Caco-2 (cell line): ENCODE measurements at regions of chr11 and their contacts with region 1.

Region 1: DNA sequence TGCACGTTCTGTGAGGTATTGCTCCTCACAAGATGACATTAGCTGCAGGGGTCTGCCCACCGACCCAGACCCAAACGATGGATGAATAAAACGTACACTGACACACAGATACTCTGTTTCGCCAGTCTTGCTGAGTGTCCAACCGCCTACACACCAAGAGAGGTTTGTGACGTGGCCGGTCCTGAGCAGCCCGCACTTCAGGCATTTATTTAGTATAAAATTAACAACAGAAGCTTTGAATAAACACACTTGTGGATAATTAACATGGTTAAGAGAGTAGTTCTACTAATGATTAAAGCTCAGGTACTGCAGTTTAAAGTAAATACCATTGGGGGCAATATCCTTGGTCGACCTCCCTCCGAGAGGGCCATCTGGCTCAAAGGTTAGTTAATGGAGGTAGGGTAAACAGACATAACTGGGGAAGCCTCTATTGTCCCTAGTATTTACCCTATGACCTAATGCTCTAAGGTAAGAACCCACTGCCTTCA is 75.7 kb downstream of the CCDC83 start:
- DNase-seq: peak; percentile 74 to 87
- H3K4me3 ChIP-seq: no peak overlapping the region
- H3K4me3 Mint-ChIP-seq: no peak overlapping the region
- H3K27ac Mint-ChIP-seq: peak overlapping the region; percentile 46
- H3K4me1 ChIP-seq: peaks cover 31% of the 10 kb centered on the region
- H3K4me1 Mint-ChIP-seq: peaks cover 29% of the 10 kb centered on the region
- H3K27me3 ChIP-seq: no peaks in the 10 kb centered on the region
- H3K27me3 Mint-ChIP-seq: no peaks in the 10 kb centered on the region
- CTCF ChIP-seq: no peak

Region 2: GRCh38 chr11:85742873-85743275 is 188.0 kb before region 1 on chr11:
- CTCF ChIA-PET with region 1: no interaction called
- POLR2A ChIA-PET with region 1: no interaction called
- intact Hi-C with region 1: no loop called
- DNase-seq: no peak
- H3K4me3 ChIP-seq: no peak overlapping the region
- H3K4me3 Mint-ChIP-seq: peak overlapping the region; percentile 15
- H3K27ac Mint-ChIP-seq: peak overlapping the region; percentile 56
- H3K4me1 ChIP-seq: peaks cover 30% of the 10 kb centered on the region
- H3K4me1 Mint-ChIP-seq: peaks cover 44% of the 10 kb centered on the region
- H3K27me3 ChIP-seq: no peaks in the 10 kb centered on the region
- H3K27me3 Mint-ChIP-seq: no peaks in the 10 kb centered on the region
- CTCF ChIP-seq: no peak

Region 3: DNA sequence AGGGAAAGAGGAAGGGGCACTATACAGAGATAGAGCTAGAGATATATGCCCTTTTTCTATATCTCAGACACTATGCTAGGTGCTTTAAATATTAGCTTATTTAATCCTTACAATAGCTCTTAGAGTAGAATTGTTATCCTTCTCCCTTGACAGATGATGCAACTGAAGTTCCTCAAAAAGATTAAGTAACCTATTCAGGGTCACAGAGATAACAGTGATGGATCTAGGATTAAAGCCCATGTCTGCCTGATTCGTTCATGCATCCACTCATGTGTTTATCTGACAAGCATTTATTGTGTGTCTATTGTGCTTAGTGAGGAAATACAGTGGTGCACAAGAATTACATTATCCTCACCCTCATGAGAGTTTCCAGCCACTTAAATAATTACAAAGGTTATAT is 67.1 kb before region 1 on chr11:
- CTCF ChIA-PET with region 1: interaction called, 3 read pairs
- POLR2A ChIA-PET with region 1: no interaction called
- intact Hi-C with region 1: loop called (anchors 2 kb)
- DNase-seq: peak in 1 of 2 experiments; percentile 36
- H3K4me3 ChIP-seq: no peak overlapping the region
- H3K4me3 Mint-ChIP-seq: no peak overlapping the region
- H3K27ac Mint-ChIP-seq: no peak overlapping the region
- H3K4me1 ChIP-seq: peaks cover 23% of the 10 kb centered on the region
- H3K4me1 Mint-ChIP-seq: peaks cover 29% of the 10 kb centered on the region
- H3K27me3 ChIP-seq: no peaks in the 10 kb centered on the region
- H3K27me3 Mint-ChIP-seq: no peaks in the 10 kb centered on the region
- CTCF ChIP-seq: no peak